ENCODE measurements at regions of chrX and their contacts with region 1.

Region 1: GRCh38 chrX:103686199-103687072 is at the start of gene MORF4L2:
- DNase-seq: peak; percentile 88
- H3K4me3 Mint-ChIP-seq: peak within 1 kb of the TSS; percentile 88
- H3K27ac Mint-ChIP-seq: peak within 1 kb of the TSS; percentile 84
- H3K4me1 Mint-ChIP-seq: peaks cover 8% of the 10 kb centered on the region
- H3K27me3 Mint-ChIP-seq: no peaks in the 10 kb centered on the region
- total RNA-seq, gene MORF4L2: 241 and 249 TPM in 2 replicates

Region 2: DNA sequence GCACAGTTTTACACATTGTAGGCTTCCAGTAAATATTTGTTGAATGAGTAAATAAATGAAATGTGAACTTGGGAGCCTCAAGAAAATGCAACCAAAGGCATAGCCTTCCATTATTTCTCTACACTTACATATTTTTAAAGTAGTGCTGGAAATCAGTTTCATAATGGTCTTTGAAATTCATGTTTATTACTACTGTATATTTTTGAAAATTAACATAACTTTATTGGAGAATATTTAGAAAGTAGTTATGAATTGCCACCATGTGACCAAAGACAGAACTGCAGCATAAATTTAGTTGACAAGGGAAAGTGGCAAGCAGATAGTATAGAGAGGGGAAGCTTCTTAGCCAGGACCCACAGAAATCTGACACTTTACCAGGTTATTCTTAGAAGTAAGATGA is 437.9 kb before region 1 on chrX:
- intact Hi-C with region 1: loop called (anchors 5 kb)
- DNase-seq: no peak
- H3K4me3 Mint-ChIP-seq: no peak overlapping the region
- H3K27ac Mint-ChIP-seq: no peak overlapping the region
- H3K4me1 Mint-ChIP-seq: peaks cover 3% of the 10 kb centered on the region
- H3K27me3 Mint-ChIP-seq: peaks cover 10% of the 10 kb centered on the region

Region 3: DNA sequence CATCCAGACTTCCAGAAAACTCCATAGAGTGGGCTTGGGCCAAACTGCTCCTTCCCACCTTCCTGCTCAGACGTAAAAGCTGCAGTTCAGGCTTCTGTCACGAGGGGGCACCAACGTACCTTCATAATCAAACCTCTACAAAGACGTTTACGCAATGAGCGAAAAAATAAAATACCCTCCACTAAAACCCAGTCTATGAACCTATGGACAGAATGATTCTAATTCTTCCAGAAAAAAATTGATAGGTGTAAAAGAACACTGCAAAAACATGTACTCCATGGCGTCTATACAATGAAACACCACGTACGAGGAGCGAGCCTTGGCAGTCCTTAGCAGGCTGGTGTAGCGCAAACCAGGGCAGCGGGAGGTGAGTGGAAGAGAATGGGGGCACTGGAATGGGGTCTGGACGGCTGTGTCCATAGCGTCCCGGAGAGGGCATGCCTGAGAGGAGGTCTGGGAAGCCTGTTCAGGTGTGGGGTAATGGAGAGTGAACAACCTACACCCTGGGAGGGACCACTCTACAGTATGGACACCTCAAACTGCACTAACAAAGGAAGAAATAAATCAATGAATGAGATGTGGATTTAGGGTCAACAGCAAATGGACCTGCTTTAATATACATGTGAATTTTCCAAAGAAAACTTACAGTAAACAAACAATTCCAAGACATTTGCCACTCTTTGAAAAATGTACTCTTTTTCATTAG is 152.8 kb before region 1 on chrX:
- intact Hi-C with region 1: loop called (anchors 5 kb)
- DNase-seq: peak; percentile 26
- H3K4me3 Mint-ChIP-seq: peak overlapping the region; percentile 65
- H3K27ac Mint-ChIP-seq: no peak overlapping the region
- H3K4me1 Mint-ChIP-seq: peaks cover 4% of the 10 kb centered on the region
- H3K27me3 Mint-ChIP-seq: no peaks in the 10 kb centered on the region

Region 4: GRCh38 chrX:103565752-103566151 is 120.7 kb before region 1 on chrX:
- intact Hi-C with region 1: no loop called
- DNase-seq: no peak
- H3K4me3 Mint-ChIP-seq: no peak overlapping the region
- H3K27ac Mint-ChIP-seq: no peak overlapping the region
- H3K4me1 Mint-ChIP-seq: no peaks in the 10 kb centered on the region
- H3K27me3 Mint-ChIP-seq: peaks cover 7% of the 10 kb centered on the region

Region 5: DNA sequence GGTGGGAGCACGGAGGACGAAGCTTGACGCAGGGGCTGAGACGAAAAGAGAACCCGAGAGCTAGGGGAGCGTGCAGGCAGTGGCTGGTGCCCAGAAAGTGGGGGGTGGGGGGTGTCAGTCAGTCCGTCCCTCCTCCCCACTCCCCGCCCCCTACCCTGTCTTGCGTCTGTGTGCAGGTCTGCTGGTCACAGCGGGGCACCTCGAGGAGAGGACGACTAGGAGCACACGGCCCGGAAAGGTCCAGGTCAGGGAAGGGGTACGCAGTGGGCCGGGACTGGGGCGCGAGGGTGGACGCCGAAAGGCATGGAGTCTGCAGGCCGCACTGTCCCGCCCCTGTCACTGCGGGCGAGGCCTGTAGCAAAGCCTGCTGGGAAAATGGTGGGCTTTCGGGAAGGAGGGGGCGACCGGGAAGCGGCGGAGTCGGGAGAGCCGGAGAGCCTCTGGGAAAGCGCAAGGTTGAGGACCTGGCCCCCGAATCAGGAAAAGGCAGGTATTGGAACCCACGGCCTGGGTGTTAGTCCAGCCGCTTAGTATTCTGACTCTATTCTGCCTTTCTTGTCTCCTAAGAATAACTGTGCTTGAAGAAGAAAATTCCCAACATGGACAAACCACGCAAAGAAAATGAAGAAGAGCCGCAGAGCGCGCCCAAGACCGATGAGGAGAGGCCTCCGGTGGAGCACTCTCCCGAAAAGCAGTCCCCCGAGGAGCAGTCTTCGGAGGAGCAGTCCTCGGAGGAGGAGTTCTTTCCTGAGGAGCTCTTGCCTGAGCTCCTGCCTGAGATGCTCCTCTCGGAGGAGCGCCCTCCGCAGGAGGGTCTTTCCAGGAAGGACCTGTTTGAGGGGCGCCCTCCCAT is 56.9 kb before region 1 on chrX:
- intact Hi-C with region 1: loop called (anchors 5 kb)
- DNase-seq: no peak
- H3K4me3 Mint-ChIP-seq: peak overlapping the region; percentile 84
- H3K27ac Mint-ChIP-seq: peak overlapping the region; percentile 39
- H3K4me1 Mint-ChIP-seq: peaks cover 18% of the 10 kb centered on the region
- H3K27me3 Mint-ChIP-seq: no peaks in the 10 kb centered on the region

Region 6: GRCh38 chrX:103730796-103731493 is 44.5 kb after region 1 on chrX:
- intact Hi-C with region 1: loop called (anchors 2 kb)
- DNase-seq: no peak
- H3K4me3 Mint-ChIP-seq: no peak overlapping the region
- H3K27ac Mint-ChIP-seq: no peak overlapping the region
- H3K4me1 Mint-ChIP-seq: peaks cover 10% of the 10 kb centered on the region
- H3K27me3 Mint-ChIP-seq: peaks cover 12% of the 10 kb centered on the region

Region 7: GRCh38 chrX:103817502-103817901 is 131.1 kb after region 1 on chrX:
- intact Hi-C with region 1: loop called (anchors 1 kb)
- DNase-seq: no peak
- H3K4me3 Mint-ChIP-seq: no peak overlapping the region
- H3K27ac Mint-ChIP-seq: no peak overlapping the region
- H3K4me1 Mint-ChIP-seq: peaks cover 7% of the 10 kb centered on the region
- H3K27me3 Mint-ChIP-seq: peaks cover 22% of the 10 kb centered on the region

Region 8: GRCh38 chrX:104156630-104157529 is 470.4 kb after region 1 on chrX and contains the start of gene SLC25A53:
- intact Hi-C with region 1: loop called (anchors 1 kb)
- DNase-seq: peak; percentile 74
- H3K4me3 Mint-ChIP-seq: peak within 1 kb of the TSS; percentile 99
- H3K27ac Mint-ChIP-seq: peak within 1 kb of the TSS; percentile 100
- H3K4me1 Mint-ChIP-seq: peaks cover 7% of the 10 kb centered on the region
- H3K27me3 Mint-ChIP-seq: no peaks in the 10 kb centered on the region
- total RNA-seq, gene SLC25A53: 4.1 and 4.3 TPM in 2 replicates

Measured in activated T-helper 2 cell treated with anti-CD3 and anti-CD28 coated beads, Interferon-gamma antibody, Interleukin-2, Interleukin-4, amounts not matched to agents 10 μg/mL and 5 μg/mL and 100 μg/mL, durations not matched to agents 14 hours and 24 hours and 36 hours (primary cell).